ENCODE measurements at regions of chr7 and their contacts with region 1.

Region 1: DNA sequence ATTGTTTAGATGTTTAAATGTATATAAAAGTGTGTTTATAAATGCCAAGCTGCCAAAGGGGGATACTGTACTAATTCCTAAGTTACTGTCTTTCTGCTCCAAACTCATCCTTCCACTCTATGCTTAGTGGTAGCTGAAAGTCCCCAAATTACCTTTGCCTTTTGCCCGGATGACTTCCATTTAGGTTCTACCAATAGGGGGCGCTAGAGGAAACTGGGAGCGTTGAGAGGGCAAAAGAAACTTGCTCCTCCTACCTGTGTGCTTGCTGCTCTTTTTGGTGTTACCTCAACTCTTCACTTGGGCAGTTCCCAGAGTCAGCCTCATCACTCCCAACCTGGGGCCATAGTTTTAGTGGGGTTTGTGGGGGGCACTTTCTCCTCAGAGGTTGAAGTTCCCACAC is 5.9 kb upstream of the OR2A25 start:
- DNase-seq: no peak
- H3K4me3 ChIP-seq: no peak overlapping the region
- H3K27ac ChIP-seq: no peak overlapping the region
- H3K4me1 ChIP-seq: no peaks in the 10 kb centered on the region
- H3K27me3 ChIP-seq: no peaks in the 10 kb centered on the region
- CTCF ChIP-seq: no peak
- EP300 ChIP-seq: no peak
- POLR2A ChIP-seq: no peak

Region 2: GRCh38 chr7:144050093-144050492 is 13.6 kb before region 1 on chr7:
- intact Hi-C with region 1: loop called in 1 of 4 experiments (anchors 1 kb)
- DNase-seq: no peak
- H3K4me3 ChIP-seq: no peak overlapping the region
- H3K27ac ChIP-seq: no peak overlapping the region
- H3K4me1 ChIP-seq: no peaks in the 10 kb centered on the region
- H3K27me3 ChIP-seq: no peaks in the 10 kb centered on the region
- CTCF ChIP-seq: no peak
- EP300 ChIP-seq: no peak
- POLR2A ChIP-seq: no peak